Activated CD8-positive, alpha-beta T cell treated with anti-CD3 and anti-CD28 coated beads for 36 hours (primary cell): ENCODE measurements at regions of chr6 and their contacts with region 1.

Region 1: DNA sequence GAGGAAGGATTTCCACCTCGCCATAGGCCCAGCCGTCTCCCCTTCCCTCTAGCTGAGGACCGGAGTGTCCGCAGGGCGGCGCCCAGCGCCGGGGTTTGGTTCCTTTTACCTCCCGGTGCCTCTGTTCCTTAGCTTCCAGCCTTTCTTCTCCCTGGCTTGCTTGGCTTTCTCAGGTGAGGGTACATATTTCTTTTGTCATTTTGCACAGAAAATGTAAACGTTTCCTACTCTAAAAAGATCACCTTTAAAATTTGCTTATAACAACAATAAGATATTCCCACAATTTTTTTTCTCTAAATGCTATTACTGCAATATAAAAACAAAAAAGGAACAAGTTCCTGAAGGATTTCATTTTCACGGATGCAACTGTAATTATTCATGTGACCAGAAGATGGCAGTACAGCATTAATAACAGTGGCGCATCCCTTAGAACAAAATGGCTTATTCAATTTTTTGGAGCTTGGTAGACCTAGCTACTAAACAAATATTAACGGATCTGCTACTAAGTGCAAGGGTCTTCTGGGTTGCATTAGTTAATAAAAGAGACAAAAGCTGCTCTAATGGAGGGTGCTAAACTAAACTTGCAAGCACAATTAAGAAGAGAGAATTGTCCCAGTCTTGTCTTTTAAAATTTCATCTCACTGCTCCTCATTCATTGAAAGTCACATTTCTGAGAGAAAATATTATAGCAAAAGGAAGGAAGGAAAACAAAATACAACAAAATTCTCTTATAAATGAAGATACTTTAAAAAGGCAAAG is 172.9 kb downstream of the ADGRG6 start:
- DNase-seq: no peak
- ATAC-seq: no peak
- H3K4me3 Mint-ChIP-seq: no peak overlapping the region
- H3K27ac Mint-ChIP-seq: no peak overlapping the region
- H3K4me1 Mint-ChIP-seq: peaks cover 5% of the 10 kb centered on the region
- H3K27me3 Mint-ChIP-seq: no peaks in the 10 kb centered on the region
- CTCF ChIP-seq: peak; percentile 90

Region 2: GRCh38 chr6:142155895-142156757 is 318.6 kb before region 1 on chr6:
- CTCF ChIA-PET with region 1: interaction called, 11 read pairs
- POLR2A ChIA-PET with region 1: no interaction called
- intact Hi-C with region 1: no loop called
- DNase-seq: no peak
- ATAC-seq: peak; percentile 53
- H3K4me3 Mint-ChIP-seq: peak overlapping the region; percentile 0
- H3K27ac Mint-ChIP-seq: no peak overlapping the region
- H3K4me1 Mint-ChIP-seq: peaks cover 53% of the 10 kb centered on the region
- H3K27me3 Mint-ChIP-seq: no peaks in the 10 kb centered on the region
- CTCF ChIP-seq: peak; percentile 62

Region 3: DNA sequence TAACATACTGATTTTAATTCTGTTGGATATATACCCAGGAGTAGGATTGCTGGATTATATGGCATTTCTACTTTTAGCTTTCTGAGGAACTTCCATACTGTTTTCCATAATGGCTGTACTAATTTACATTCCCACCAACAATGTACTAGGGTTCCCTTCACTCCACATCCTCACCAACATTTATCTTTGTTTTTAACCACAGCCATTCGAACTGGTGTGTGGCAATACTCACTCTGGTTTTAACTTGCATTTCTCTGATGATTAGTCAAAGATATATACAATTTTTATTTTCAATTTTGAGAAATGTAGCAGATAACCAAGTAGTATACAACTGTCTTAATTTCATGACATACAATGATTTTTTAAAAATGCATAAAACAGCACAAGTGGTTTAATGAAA is 203.2 kb before region 1 on chr6:
- CTCF ChIA-PET with region 1: no interaction called
- POLR2A ChIA-PET with region 1: no interaction called
- intact Hi-C with region 1: no loop called
- DNase-seq: no peak
- ATAC-seq: no peak
- H3K4me3 Mint-ChIP-seq: no peak overlapping the region
- H3K27ac Mint-ChIP-seq: no peak overlapping the region
- H3K4me1 Mint-ChIP-seq: no peaks in the 10 kb centered on the region
- H3K27me3 Mint-ChIP-seq: peaks cover 4% of the 10 kb centered on the region
- CTCF ChIP-seq: no peak

Region 4: DNA sequence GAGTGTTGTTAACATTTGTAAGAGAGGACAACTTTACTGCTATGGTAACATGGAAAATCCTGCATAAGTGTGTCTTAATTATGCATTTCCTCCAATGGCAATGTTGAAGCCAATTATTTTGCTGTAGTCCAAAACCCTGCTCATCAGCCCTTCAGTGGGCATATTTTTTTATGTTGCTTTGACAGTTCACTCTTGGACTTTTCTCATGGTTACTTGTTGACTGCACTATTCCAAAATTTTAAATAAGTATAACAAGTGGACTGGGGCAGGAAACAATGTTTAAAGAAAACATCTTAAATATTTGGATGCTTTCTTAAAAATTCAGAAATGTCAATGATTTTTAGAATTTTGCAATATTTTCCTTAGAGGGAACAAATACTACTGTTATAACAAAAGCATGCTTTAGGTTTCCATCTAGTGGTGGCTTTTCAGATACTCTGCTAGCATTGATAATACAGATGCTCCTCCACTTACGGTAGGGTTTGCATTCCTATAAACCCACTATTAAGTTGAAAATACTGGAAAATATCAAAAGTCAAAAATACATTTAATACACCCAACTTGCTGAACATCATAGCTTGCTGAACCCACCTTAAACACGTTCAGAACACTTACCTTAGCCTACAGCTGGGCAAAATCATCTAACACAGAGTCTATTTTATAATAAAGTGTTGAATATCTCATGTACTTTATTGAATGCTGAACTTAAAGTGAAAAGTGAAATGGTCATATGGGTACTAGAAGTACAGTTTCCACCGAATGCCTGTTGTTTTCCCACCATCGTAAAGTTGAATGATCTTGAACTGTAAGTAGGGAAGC is 86.5 kb before region 1 on chr6:
- CTCF ChIA-PET with region 1: no interaction called
- POLR2A ChIA-PET with region 1: no interaction called
- intact Hi-C with region 1: no loop called
- DNase-seq: no peak
- ATAC-seq: peak; percentile 68
- H3K4me3 Mint-ChIP-seq: no peak overlapping the region
- H3K27ac Mint-ChIP-seq: no peak overlapping the region
- H3K4me1 Mint-ChIP-seq: peaks cover 3% of the 10 kb centered on the region
- H3K27me3 Mint-ChIP-seq: no peaks in the 10 kb centered on the region
- CTCF ChIP-seq: peak; percentile 63

Region 5: DNA sequence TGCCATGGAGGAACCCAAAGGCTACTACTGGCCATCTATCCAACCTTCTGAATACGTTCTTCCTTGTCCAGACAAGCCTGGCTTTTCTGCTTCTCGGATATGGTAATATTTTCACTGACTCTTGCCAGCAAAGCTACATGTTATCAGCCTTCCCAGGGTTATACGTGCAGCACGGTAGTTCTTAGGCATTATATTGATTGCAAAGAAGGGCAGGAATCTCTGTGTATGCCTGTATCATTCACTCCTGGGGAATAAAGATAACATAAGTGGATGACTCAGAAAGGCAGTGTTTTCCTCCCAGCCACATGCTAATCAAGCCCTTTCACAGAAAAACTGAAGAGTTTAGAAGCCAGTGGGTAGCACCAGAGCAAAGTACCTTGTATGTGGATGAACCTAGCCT is 74.2 kb before region 1 on chr6:
- CTCF ChIA-PET with region 1: no interaction called
- POLR2A ChIA-PET with region 1: no interaction called
- intact Hi-C with region 1: no loop called
- DNase-seq: no peak
- ATAC-seq: no peak
- H3K4me3 Mint-ChIP-seq: no peak overlapping the region
- H3K27ac Mint-ChIP-seq: no peak overlapping the region
- H3K4me1 Mint-ChIP-seq: peaks cover 14% of the 10 kb centered on the region
- H3K27me3 Mint-ChIP-seq: no peaks in the 10 kb centered on the region
- CTCF ChIP-seq: no peak

Region 6: GRCh38 chr6:142500250-142500786 is 25.6 kb after region 1 on chr6:
- CTCF ChIA-PET with region 1: interaction called, 10 read pairs
- POLR2A ChIA-PET with region 1: no interaction called
- intact Hi-C with region 1: no loop called
- DNase-seq: no peak
- ATAC-seq: no peak
- H3K4me3 Mint-ChIP-seq: no peak overlapping the region
- H3K27ac Mint-ChIP-seq: no peak overlapping the region
- H3K4me1 Mint-ChIP-seq: no peaks in the 10 kb centered on the region
- H3K27me3 Mint-ChIP-seq: no peaks in the 10 kb centered on the region
- CTCF ChIP-seq: no peak

Region 7: GRCh38 chr6:142566628-142567396 is 92.1 kb after region 1 on chr6:
- CTCF ChIA-PET with region 1: interaction called, 14 read pairs
- POLR2A ChIA-PET with region 1: no interaction called
- intact Hi-C with region 1: no loop called
- DNase-seq: peak; percentile 68
- ATAC-seq: peak; percentile 66
- H3K4me3 Mint-ChIP-seq: no peak overlapping the region
- H3K27ac Mint-ChIP-seq: no peak overlapping the region
- H3K4me1 Mint-ChIP-seq: peaks cover 53% of the 10 kb centered on the region
- H3K27me3 Mint-ChIP-seq: no peaks in the 10 kb centered on the region
- CTCF ChIP-seq: peak; percentile 93

Region 8: GRCh38 chr6:142692942-142693341 is 218.2 kb after region 1 on chr6:
- CTCF ChIA-PET with region 1: interaction called, 13 read pairs
- POLR2A ChIA-PET with region 1: no interaction called
- intact Hi-C with region 1: no loop called
- DNase-seq: peak; percentile 73
- ATAC-seq: peak; percentile 84
- H3K4me3 Mint-ChIP-seq: no peak overlapping the region
- H3K27ac Mint-ChIP-seq: no peak overlapping the region
- H3K4me1 Mint-ChIP-seq: peaks cover 24% of the 10 kb centered on the region
- H3K27me3 Mint-ChIP-seq: no peaks in the 10 kb centered on the region
- CTCF ChIP-seq: peak; percentile 82

Region 9: GRCh38 chr6:143427109-143427817 is 952.6 kb after region 1 on chr6:
- CTCF ChIA-PET with region 1: interaction called, 34 read pairs
- POLR2A ChIA-PET with region 1: no interaction called
- intact Hi-C with region 1: loop called (anchors 10 kb)
- DNase-seq: peak; percentile 80
- ATAC-seq: peak; percentile 100
- H3K4me3 Mint-ChIP-seq: no peak overlapping the region
- H3K27ac Mint-ChIP-seq: no peak overlapping the region
- H3K4me1 Mint-ChIP-seq: peaks cover 5% of the 10 kb centered on the region
- H3K27me3 Mint-ChIP-seq: no peaks in the 10 kb centered on the region
- CTCF ChIP-seq: peak; percentile 95